OCI-LY7 (cell line): ENCODE measurements at regions of chr5 and their contacts with region 1.

Region 1: GRCh38 chr5:10353241-10354047 is at the start of gene MARCHF6:
- DNase-seq: peak; percentile 97
- H3K4me3 ChIP-seq: peak within 1 kb of the TSS; percentile 88
- H3K27ac ChIP-seq: peak within 1 kb of the TSS; percentile 88
- H3K4me1 ChIP-seq: peaks cover 40% of the 10 kb centered on the region
- CTCF ChIP-seq: no peak
- total RNA-seq, gene MARCHF6: 48.2 and 118 TPM in 2 replicates

Region 2: GRCh38 chr5:10249948-10250803 is 103.3 kb before region 1 on chr5 and contains the start of gene CCT5:
- CTCF ChIA-PET with region 1: no interaction called
- POLR2A ChIA-PET with region 1: interaction called, 3 read pairs
- intact Hi-C with region 1: loop called (anchors 1 kb)
- DNase-seq: peak; percentile 99
- H3K4me3 ChIP-seq: peak within 1 kb of the TSS; percentile 96
- H3K27ac ChIP-seq: peak within 1 kb of the TSS; percentile 72
- H3K4me1 ChIP-seq: peaks cover 35% of the 10 kb centered on the region
- CTCF ChIP-seq: no peak
- total RNA-seq, gene CCT5: 498 and 551 TPM in 2 replicates

Region 3: GRCh38 chr5:10283927-10284635 is 69.4 kb before region 1 on chr5:
- CTCF ChIA-PET with region 1: interaction called, 3 read pairs
- POLR2A ChIA-PET with region 1: interaction called, 11 read pairs
- intact Hi-C with region 1: loop called (anchors 1 kb)
- DNase-seq: peak; percentile 87
- H3K4me3 ChIP-seq: peak overlapping the region; percentile 30
- H3K27ac ChIP-seq: no peak overlapping the region
- H3K4me1 ChIP-seq: peaks cover 22% of the 10 kb centered on the region
- CTCF ChIP-seq: peak; percentile 94

Region 4: DNA sequence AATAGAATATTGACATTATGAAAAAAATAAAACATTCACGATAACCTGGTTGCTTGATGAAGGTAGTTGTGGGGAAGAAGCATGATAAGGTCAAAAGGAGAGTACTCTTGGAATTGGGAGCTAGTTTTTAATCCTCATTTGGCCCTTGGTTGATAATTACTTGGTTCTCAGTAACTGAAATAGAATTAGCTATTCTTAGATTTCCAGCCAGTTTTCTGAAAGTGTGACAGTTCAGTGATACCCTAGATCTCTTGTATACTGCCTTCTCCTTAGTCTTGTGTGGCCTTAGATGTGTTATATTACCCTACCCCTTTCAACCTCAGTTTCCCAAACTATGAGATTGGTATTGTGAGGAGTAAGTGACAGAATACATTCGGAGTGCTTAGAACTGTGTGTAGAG is 17.5 kb after region 1 on chr5:
- CTCF ChIA-PET with region 1: no interaction called
- POLR2A ChIA-PET with region 1: interaction called, 10 read pairs
- intact Hi-C with region 1: no loop called
- DNase-seq: no peak
- H3K4me3 ChIP-seq: no peak overlapping the region
- H3K27ac ChIP-seq: no peak overlapping the region
- H3K4me1 ChIP-seq: no peaks in the 10 kb centered on the region
- CTCF ChIP-seq: no peak

Region 5: DNA sequence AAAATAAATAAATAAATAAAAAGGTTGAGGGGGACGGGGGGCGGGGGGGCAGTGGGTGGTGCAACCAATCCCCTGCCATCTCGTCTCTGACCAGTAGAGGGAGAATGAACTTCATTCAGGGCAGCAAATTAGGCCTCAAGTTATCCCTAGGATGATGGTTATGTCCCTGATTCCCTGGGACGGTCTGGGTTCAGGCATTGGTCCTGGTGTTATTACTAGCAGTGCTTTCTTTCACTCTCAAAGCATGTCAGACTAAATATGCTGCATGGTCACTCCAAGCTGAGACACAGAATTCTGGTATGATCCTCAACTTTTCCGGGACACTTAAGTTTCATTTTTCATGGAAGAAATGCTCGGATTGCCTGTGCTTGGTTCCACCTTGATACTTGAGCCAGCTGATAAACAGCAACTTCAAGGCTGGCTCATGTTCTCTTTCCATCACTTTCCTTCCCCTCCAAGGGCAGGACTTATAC is 348.2 kb after region 1 on chr5:
- CTCF ChIA-PET with region 1: no interaction called
- POLR2A ChIA-PET with region 1: no interaction called
- intact Hi-C with region 1: loop called (anchors 2 kb)
- DNase-seq: peak; percentile 61
- H3K4me3 ChIP-seq: no peak overlapping the region
- H3K27ac ChIP-seq: peak overlapping the region; percentile 95
- H3K4me1 ChIP-seq: peaks cover 64% of the 10 kb centered on the region
- CTCF ChIP-seq: peak; percentile 76

Region 6: DNA sequence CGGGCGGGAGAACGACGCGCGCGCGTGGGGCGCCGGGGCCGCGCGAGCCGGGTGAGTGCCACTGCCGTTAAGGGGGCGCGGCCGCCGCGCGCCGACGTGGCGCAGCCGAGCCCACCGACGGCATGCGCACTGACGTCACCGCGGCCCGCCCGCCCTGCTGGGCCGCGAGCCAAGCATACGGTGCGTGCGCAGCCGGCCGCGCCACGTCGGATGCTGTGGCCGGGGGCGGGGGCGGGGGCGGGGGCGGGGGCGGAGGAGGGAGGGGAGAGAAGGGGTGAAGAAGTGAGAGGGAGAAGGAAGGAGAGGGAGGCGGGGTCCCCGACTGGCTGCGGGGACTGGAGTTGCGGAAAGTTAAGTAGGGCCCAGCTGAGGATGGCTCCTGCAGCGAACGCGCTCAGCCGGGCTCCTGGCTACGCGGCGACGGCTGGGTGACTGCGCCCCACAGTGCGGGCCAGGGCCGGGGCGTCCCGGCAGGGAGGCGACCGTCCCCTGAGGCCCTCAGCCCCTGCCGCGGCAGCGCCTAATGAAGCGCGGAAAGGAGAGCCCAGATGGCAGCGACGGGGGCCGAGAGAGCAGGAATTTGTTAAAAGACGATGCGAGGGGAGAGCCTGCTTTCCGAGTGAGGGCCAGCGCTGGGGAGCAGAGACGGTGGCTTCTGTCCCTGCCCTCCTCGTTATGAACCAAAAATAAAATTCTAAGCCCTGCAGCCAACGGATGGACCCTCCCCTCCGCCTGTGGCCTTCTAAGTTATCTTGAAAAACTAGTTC is 407.9 kb after region 1 on chr5 and contains the start of gene DAP:
- CTCF ChIA-PET with region 1: no interaction called
- POLR2A ChIA-PET with region 1: no interaction called
- intact Hi-C with region 1: loop called (anchors 2 kb)
- DNase-seq: peak; percentile 95
- H3K4me3 ChIP-seq: peak within 1 kb of the TSS; percentile 85
- H3K27ac ChIP-seq: peak within 1 kb of the TSS; percentile 75
- H3K4me1 ChIP-seq: peaks cover 44% of the 10 kb centered on the region
- CTCF ChIP-seq: no peak
- total RNA-seq, gene DAP: 15.9 and 21.5 TPM in 2 replicates